Spleen (tissue), 13 donors: ENCODE measurements at regions of chr19 and their contacts with region 1.

Region 1: GRCh38 chr19:15144036-15144646 is 36.9 kb downstream of the SYDE1 start:
- DNase-seq: no peak
- H3K4me3 ChIP-seq: no peak overlapping the region
- H3K27ac ChIP-seq: no peak overlapping the region
- H3K4me1 ChIP-seq: no peaks in the 10 kb centered on the region
- H3K27me3 ChIP-seq: peaks cover 0 to 26% (median 0%) of the 10 kb centered on the region in 7 donors
- CTCF ChIP-seq: no peak
- POLR2A ChIP-seq: no peak

Region 2: DNA sequence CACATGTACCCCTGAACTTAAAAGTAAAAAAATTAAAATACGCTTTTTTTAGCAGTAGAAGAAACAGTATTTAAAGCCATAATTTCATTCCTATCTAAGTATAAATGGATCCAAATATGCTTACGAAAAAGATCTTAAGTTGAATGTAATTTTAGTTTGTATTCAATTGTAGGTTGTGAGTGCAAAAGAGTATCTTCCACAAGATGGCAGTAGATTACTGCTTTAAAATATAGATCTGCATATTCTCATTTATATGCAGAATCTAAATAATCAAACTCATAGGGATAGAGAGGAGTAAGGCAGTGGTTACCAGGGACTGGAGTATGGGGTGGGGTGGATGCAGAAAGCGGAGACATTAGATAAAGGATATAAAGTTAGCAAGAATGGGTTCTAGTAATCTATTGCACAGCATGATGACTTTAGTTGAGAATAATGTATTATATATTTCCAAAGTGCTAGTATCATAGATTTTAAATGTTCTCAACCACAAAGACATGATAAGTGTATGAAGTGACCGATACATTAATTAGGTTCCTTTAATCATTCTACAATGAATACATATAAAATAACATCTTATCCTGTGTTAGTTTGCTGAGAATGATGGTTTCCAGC is 272.4 kb before region 1 on chr19:
- intact Hi-C with region 1: loop called (anchors 10 kb)
- DNase-seq: no peak
- H3K4me3 ChIP-seq: no peak overlapping the region
- H3K27ac ChIP-seq: no peak overlapping the region
- H3K4me1 ChIP-seq: no peaks in the 10 kb centered on the region
- H3K27me3 ChIP-seq: peaks cover 0 to 26% (median 0%) of the 10 kb centered on the region in 7 donors
- CTCF ChIP-seq: peak in 9 of 11 experiments; percentile 27 to 63 (median 55)
- POLR2A ChIP-seq: no peak

Region 3: DNA sequence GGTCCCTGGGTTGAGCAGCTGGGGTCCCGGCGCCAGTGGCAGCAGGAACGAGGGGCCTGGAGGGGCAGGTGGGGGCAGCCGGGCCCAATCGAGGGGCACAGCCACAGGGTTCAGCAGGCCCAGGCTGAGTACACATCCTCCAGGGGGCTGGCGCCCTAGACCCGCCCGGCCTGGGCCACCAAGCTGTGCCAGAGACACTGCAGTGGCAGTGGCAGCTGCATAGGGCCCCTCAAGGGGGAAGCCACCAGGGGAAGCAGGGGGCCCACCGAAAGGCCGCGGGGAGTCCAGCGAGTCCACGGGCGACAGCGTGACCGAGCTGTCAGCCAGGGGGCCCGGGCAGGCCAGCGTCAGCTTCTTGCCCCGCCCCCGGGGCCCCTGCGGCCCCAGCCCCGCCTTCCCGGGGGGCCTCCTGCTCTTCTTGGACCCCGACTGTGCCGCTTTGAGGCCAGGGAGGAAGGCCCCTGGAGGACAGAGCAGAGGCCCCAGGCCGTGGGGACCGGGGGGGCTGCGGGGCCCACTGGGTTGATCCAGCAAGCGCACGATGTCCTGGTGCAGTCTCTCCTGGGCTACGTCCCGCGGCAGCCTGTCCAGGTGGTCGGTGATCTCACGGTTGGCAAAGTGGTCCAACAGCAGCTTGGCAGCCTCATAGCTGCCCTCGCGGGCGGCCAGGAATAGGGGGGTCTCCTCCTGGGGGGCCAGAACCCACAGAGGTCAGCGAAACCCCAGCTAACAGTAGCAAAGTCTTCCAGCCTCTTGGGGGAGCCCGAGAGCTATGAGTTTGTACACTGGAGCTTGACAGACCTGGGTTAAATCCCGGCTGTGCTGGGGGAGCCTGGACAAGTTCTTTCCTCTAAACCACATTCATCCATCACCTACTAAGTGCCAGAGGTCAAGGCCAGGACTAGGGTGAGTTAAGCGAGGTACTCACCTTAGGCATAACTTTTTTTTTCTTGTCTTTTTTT is 17.2 kb after region 1 on chr19:
- intact Hi-C with region 1: no loop called
- DNase-seq: no peak
- H3K4me3 ChIP-seq: no peak overlapping the region
- H3K27ac ChIP-seq: no peak overlapping the region
- H3K4me1 ChIP-seq: no peaks in the 10 kb centered on the region
- H3K27me3 ChIP-seq: peaks cover 0 to 17% (median 0%) of the 10 kb centered on the region in 7 donors
- CTCF ChIP-seq: no peak
- POLR2A ChIP-seq: no peak